Activated CD4-positive, alpha-beta T cell treated with anti-CD3 and anti-CD28 coated beads for 36 hours (primary cell): ENCODE measurements at regions of chr17 and their contacts with region 1.

Region 1: GRCh38 chr17:18260332-18261144 is at the start of gene MIEF2:
- DNase-seq: peak; percentile 96
- ATAC-seq: peak; percentile 92
- H3K4me3 Mint-ChIP-seq: peak within 1 kb of the TSS; percentile 76
- H3K27ac Mint-ChIP-seq: peak within 1 kb of the TSS; percentile 80
- H3K4me1 Mint-ChIP-seq: peaks cover 42% of the 10 kb centered on the region
- H3K27me3 Mint-ChIP-seq: no peaks in the 10 kb centered on the region
- total RNA-seq, gene MIEF2: 3.3 to 5.2 TPM

Region 2: GRCh38 chr17:17859909-17860765 is 400.4 kb before region 1 on chr17:
- CTCF ChIA-PET with region 1: no interaction called
- POLR2A ChIA-PET with region 1: no interaction called
- intact Hi-C with region 1: no loop called
- DNase-seq: peak; percentile 83
- ATAC-seq: peak; percentile 91
- H3K4me3 Mint-ChIP-seq: no peak overlapping the region
- H3K27ac Mint-ChIP-seq: no peak overlapping the region
- H3K4me1 Mint-ChIP-seq: peaks cover 27% of the 10 kb centered on the region
- H3K27me3 Mint-ChIP-seq: no peaks in the 10 kb centered on the region

Region 3: DNA sequence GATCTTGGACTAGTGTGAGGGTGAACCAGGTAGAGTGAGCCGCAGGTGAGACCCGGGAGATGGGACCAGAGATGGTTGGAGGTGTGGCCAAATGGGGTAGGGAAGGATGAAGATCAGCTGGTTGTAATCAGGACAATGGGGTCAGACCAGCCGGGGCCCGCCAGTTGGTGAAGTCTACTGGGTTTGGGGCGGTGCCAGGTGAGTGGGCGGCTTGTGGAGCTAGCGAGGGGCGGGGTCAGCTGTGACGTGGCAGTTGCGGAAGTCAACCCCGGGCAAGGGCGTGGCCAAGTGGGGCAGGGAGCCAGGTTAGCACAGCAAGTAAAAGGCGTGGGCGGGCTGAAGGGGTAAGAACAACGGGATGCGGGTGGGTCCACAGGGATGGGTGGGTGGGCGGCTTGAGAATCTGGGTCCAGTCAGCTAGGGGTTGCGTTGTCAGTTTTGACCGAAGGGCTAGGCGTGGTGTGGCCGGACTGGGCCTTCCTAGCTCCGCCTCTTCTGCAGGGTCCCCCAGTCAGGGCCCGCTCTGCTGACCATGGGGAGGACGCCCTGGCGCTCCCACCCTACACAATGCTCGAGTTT is 102.4 kb before region 1 on chr17:
- CTCF ChIA-PET with region 1: no interaction called
- POLR2A ChIA-PET with region 1: no interaction called
- intact Hi-C with region 1: loop called in 1 of 2 experiments (anchors 1 kb)
- DNase-seq: peak; percentile 99
- ATAC-seq: peak; percentile 87
- H3K4me3 Mint-ChIP-seq: peak overlapping the region; percentile 63
- H3K27ac Mint-ChIP-seq: peak overlapping the region; percentile 81
- H3K4me1 Mint-ChIP-seq: peaks cover 9% of the 10 kb centered on the region
- H3K27me3 Mint-ChIP-seq: no peaks in the 10 kb centered on the region

Region 4: DNA sequence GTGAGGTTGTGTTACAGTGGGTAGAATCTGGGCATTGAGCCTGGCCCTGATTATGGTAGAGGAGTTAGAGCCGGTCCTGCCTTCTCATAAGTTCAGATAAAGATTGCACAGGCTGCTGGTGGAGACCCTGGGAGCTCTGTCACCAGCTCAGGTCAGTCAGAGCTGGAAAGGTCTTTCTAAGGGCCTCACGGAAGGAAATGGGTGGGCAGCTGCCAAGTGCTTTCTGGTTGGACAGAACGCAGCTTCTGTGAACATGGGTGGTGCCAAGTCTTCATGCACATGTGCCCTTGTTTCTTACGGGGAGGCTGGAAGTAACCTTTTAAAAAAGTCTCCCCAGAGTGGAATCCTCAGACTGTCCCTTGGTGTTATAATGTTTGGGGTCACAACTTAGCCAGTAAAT is 62.0 kb before region 1 on chr17:
- CTCF ChIA-PET with region 1: no interaction called
- POLR2A ChIA-PET with region 1: no interaction called
- intact Hi-C with region 1: no loop called
- DNase-seq: no peak
- ATAC-seq: no peak
- H3K4me3 Mint-ChIP-seq: no peak overlapping the region
- H3K27ac Mint-ChIP-seq: no peak overlapping the region
- H3K4me1 Mint-ChIP-seq: peaks cover 39% of the 10 kb centered on the region
- H3K27me3 Mint-ChIP-seq: no peaks in the 10 kb centered on the region

Region 5: GRCh38 chr17:18225121-18225566 is 35.4 kb before region 1 on chr17:
- CTCF ChIA-PET with region 1: no interaction called
- POLR2A ChIA-PET with region 1: no interaction called
- intact Hi-C with region 1: loop called (anchors 1 kb)
- DNase-seq: peak; percentile 99
- ATAC-seq: peak; percentile 98
- H3K4me3 Mint-ChIP-seq: peak overlapping the region; percentile 56
- H3K27ac Mint-ChIP-seq: peak overlapping the region; percentile 55
- H3K4me1 Mint-ChIP-seq: peaks cover 18% of the 10 kb centered on the region
- H3K27me3 Mint-ChIP-seq: no peaks in the 10 kb centered on the region

Region 6: GRCh38 chr17:18363101-18364049 is 102.8 kb after region 1 on chr17 and contains the start of gene SHMT1:
- CTCF ChIA-PET with region 1: no interaction called
- POLR2A ChIA-PET with region 1: no interaction called
- intact Hi-C with region 1: loop called in 1 of 2 experiments (anchors 1 kb)
- DNase-seq: peak; percentile 95
- ATAC-seq: peak; percentile 100
- H3K4me3 Mint-ChIP-seq: peak within 1 kb of the TSS; percentile 87
- H3K27ac Mint-ChIP-seq: peak within 1 kb of the TSS; percentile 66
- H3K4me1 Mint-ChIP-seq: peaks cover 12% of the 10 kb centered on the region
- H3K27me3 Mint-ChIP-seq: no peaks in the 10 kb centered on the region
- total RNA-seq, gene SHMT1: 58.7 to 61.0 TPM